Right cardiac atrium (tissue), 5 donors: ENCODE measurements at regions of chr10 and their contacts with region 1.

Region 1: GRCh38 chr10:30783939-30784500 is 154.5 kb upstream of the LYZL2 start:
- DNase-seq: peak; percentile 89 to 96 (median 95)
- ATAC-seq: peak; percentile 86 to 88
- H3K4me3 ChIP-seq: peak overlapping the region; percentile 90
- H3K27ac ChIP-seq: peak overlapping the region; percentile 86
- H3K4me1 ChIP-seq: no peaks in the 10 kb centered on the region
- H3K27me3 ChIP-seq: no peaks in the 10 kb centered on the region

Region 2: GRCh38 chr10:31020209-31020608 is 236.2 kb after region 1 on chr10:
- intact Hi-C with region 1: loop called in 1 of 4 experiments (anchors 10 kb)
- DNase-seq: peak in 1 of 3 donors; percentile 53
- ATAC-seq: no peak
- H3K4me3 ChIP-seq: no peak overlapping the region
- H3K27ac ChIP-seq: no peak overlapping the region
- H3K4me1 ChIP-seq: peaks cover 5% of the 10 kb centered on the region
- H3K27me3 ChIP-seq: no peaks in the 10 kb centered on the region

Region 3: DNA sequence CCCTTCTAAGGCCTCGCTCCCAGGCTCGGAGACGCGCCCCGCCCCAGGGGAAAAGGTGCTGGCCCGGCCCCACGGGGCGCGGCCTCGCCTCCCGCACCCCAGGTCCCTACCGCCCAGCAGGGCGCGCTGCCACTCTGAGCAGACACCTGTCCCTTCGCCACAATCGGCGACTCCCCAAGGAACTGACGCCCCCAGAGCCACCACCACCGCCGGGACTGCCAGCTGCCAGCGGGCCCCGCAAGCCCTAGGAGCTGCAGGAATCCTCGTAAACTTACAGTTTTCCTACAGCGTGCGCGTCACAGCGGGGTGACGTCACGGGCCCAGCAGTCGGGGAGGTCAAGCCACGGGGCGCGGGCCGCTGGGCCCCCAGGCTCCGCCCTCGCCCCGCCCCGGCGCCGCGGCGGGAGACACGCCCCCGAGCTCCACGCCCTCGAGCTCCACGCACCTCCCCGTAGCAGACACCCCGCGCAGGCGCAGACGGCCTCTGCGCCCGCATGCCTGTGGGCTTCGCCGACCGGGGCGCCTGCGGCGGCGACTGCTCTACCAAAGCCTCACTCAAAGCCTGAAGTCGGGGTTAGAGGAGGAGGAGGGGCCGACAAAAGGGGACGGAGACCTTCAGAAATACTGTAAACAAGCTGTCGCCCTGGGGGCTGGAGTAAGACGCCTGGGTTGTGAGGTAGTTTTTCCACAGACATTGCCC is 247.7 kb after region 1 on chr10 and contains the start of gene ZNF438:
- intact Hi-C with region 1: loop called in 2 of 4 experiments (anchors 10 kb)
- DNase-seq: peak; percentile 96 to 99 (median 99)
- ATAC-seq: peak; percentile 97 to 98
- H3K4me3 ChIP-seq: peak within 1 kb of the TSS; percentile 51
- H3K27ac ChIP-seq: peak within 1 kb of the TSS; percentile 98
- H3K4me1 ChIP-seq: peaks cover 8% of the 10 kb centered on the region
- H3K27me3 ChIP-seq: no peaks in the 10 kb centered on the region
- total RNA-seq, gene ZNF438: 15.2 to 17.1 (median 15.9) TPM

Region 4: GRCh38 chr10:31318854-31319601 is 535.0 kb after region 1 on chr10 and contains the start of gene ZEB1:
- intact Hi-C with region 1: loop called in 3 of 4 experiments (anchors 5 to 10 kb)
- DNase-seq: peak; percentile 90 to 93 (median 91)
- ATAC-seq: peak; percentile 78
- H3K4me3 ChIP-seq: peak within 1 kb of the TSS; percentile 96
- H3K27ac ChIP-seq: peak within 1 kb of the TSS; percentile 100
- H3K4me1 ChIP-seq: no peaks in the 10 kb centered on the region
- H3K27me3 ChIP-seq: no peaks in the 10 kb centered on the region
- total RNA-seq, gene ZEB1: 64.9 to 72.8 (median 69.2) TPM

Region 5: DNA sequence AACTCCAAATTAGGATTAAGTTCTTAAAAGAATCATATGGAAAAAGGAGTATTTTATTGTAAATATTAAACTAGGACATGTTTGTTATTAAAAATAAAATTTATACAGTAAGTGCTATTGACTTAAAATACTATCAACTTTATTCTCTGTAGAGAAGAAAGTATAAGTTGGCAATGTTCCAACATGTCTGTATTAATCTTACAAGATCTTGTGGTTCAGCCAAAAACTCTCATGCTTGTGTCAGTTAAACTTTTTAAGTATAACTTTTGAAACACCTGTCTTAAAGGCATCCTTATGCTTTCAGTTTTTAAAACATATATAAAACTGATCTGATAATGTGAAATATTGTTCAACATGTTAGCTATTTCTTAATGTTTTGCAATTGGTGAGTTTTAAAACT is 695.7 kb after region 1 on chr10:
- intact Hi-C with region 1: loop called in 2 of 4 experiments (anchors 10 kb)
- DNase-seq: no peak
- ATAC-seq: no peak
- H3K4me3 ChIP-seq: no peak overlapping the region
- H3K27ac ChIP-seq: no peak overlapping the region
- H3K4me1 ChIP-seq: no peaks in the 10 kb centered on the region
- H3K27me3 ChIP-seq: no peaks in the 10 kb centered on the region